AG04450 (cell line): ENCODE measurements at regions of chr18 and their contacts with region 1.

Region 1: DNA sequence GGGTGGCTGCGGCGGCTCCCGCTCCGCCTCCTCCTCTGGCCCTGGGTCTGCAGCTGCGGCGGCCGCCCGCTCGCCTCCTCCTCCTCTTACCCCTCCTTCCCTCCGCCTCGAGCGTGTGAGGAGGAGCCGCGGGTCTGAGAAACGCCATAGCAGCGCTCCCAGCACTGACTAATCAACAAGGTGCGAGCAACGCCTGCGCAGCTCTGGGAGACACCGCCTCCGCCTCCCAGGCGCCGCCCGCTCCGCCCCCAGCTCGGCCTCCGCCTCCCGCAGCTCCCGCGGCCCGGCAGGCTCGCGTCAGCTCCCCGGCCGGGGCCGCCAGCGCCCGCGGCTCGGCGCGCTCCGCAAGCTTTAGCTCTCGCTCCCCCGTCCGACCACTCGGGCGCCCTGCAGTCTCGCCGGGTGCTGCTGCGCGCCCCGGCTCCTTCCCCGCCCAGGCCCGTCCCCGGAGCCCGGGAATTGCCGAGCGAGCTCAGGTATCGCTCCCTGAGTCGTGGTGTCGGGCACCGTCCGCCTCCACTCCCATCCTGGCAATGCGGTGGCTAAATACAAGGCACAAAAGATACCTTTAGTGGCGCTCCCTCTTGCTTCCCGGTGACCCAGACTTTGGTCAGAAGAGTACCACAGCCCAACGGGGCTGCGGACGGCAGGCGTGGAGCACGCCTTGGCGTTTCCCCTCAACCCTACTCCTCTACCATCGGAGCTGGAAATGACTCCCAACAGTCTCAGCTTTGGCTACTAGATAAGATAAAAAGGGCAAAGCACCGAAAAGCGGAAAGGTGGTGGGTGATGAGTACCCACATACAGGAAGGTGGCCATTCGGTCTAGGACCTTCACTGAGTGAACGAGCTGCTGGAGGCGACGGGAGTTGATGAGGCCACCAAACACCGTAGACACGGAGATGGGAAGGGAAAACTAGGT is at the start of gene GAREM1:
- DNase-seq: peak; percentile 96
- H3K4me3 ChIP-seq: peak within 1 kb of the TSS; percentile 68
- H3K27ac ChIP-seq: no peak within 1 kb of the TSS
- H3K27me3 ChIP-seq: peaks cover 4% of the 10 kb centered on the region
- CTCF ChIP-seq: peak; percentile 66
- polyA plus RNA-seq, gene GAREM1: 2.8 and 3.4 TPM in 2 replicates

Region 2: GRCh38 chr18:32261003-32261402 is 210.0 kb before region 1 on chr18:
- CTCF ChIA-PET with region 1: interaction called, 13 read pairs
- POLR2A ChIA-PET with region 1: interaction called, 3 read pairs
- DNase-seq: no peak
- H3K4me3 ChIP-seq: no peak overlapping the region
- H3K27ac ChIP-seq: no peak overlapping the region
- H3K27me3 ChIP-seq: no peaks in the 10 kb centered on the region
- CTCF ChIP-seq: peak; percentile 13; the same call in 1 of the 2 replicates

Region 3: GRCh38 chr18:32308493-32309120 is 162.4 kb before region 1 on chr18:
- CTCF ChIA-PET with region 1: interaction called, 15 read pairs
- POLR2A ChIA-PET with region 1: no interaction called
- DNase-seq: peak; percentile 70
- H3K4me3 ChIP-seq: no peak overlapping the region
- H3K27ac ChIP-seq: no peak overlapping the region
- H3K27me3 ChIP-seq: no peaks in the 10 kb centered on the region
- CTCF ChIP-seq: no peak

Region 4: GRCh38 chr18:32425466-32425865 is 45.5 kb before region 1 on chr18:
- CTCF ChIA-PET with region 1: interaction called, 14 read pairs
- POLR2A ChIA-PET with region 1: interaction called, 4 read pairs
- DNase-seq: no peak
- H3K4me3 ChIP-seq: no peak overlapping the region
- H3K27ac ChIP-seq: no peak overlapping the region
- H3K27me3 ChIP-seq: no peaks in the 10 kb centered on the region
- CTCF ChIP-seq: no peak

Region 5: GRCh38 chr18:32552421-32553030 is 81.6 kb after region 1 on chr18:
- CTCF ChIA-PET with region 1: interaction called, 14 read pairs
- POLR2A ChIA-PET with region 1: interaction called, 4 read pairs
- DNase-seq: peak; percentile 41
- H3K4me3 ChIP-seq: no peak overlapping the region
- H3K27ac ChIP-seq: no peak overlapping the region
- H3K27me3 ChIP-seq: peaks cover 3% of the 10 kb centered on the region
- CTCF ChIP-seq: peak; percentile 77

Region 6: DNA sequence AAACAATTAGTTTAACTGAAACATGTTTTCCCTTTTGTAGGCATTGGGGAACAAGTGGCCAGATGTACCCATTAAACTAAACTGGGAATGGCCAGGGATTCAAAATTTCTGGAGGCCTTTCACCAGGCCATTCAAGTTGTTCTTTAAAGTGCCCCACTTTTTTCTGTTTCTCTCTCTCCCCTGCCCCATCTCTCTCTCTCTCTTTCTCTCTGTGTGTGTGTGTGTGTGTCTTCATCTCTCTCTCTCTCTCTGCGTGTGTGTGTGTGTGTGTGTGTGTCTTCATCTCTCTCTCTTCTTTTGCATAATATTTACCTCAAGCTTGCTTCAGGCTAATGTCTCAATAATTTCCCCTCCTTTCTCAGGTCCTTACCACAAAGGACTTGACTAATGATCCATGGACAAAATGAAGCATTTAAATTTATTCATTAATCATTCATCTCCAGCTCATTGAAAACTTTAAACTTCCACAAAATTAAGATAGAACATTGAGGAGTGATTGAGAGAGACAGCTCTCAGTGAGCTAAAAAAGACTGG is 466.1 kb after region 1 on chr18:
- CTCF ChIA-PET with region 1: no interaction called
- POLR2A ChIA-PET with region 1: no interaction called
- DNase-seq: no peak
- H3K4me3 ChIP-seq: no peak overlapping the region
- H3K27ac ChIP-seq: no peak overlapping the region
- H3K27me3 ChIP-seq: no peaks in the 10 kb centered on the region
- CTCF ChIP-seq: no peak